ENCODE measurements at regions of chr1 and their contacts with region 1.

Region 1: DNA sequence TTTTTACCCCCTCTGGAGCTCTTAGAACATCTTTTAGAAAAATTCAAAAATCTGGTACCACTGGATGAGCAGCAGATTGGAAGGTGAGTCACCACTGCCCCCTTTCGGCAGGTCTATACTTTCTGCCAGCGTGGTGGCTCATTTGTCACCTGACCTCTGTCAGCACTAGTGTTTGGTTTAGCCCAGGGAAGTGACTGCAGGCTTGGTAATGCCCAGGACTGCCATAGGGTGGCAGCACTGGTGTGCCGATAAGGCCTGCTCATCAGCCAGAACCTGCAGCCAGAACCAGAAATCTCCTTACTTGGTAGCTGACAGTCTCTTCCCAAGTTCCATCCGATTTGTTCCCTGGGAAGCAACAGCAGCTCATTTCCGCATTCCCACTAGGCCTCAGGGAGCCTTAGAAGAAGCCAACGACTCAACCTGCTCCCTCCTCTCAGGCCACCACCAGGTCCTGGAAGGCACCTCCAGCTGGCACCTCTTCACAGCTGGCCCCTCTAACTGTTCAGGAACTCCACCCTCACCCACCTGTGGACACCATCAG is 6.8 kb downstream of the SMIM12 start:
- DNase-seq: peak; percentile 87
- H3K4me3 Mint-ChIP-seq: no peak overlapping the region
- H3K27ac Mint-ChIP-seq: no peak overlapping the region
- H3K4me1 Mint-ChIP-seq: peaks cover 18% of the 10 kb centered on the region
- H3K27me3 Mint-ChIP-seq: no peaks in the 10 kb centered on the region

Region 2: DNA sequence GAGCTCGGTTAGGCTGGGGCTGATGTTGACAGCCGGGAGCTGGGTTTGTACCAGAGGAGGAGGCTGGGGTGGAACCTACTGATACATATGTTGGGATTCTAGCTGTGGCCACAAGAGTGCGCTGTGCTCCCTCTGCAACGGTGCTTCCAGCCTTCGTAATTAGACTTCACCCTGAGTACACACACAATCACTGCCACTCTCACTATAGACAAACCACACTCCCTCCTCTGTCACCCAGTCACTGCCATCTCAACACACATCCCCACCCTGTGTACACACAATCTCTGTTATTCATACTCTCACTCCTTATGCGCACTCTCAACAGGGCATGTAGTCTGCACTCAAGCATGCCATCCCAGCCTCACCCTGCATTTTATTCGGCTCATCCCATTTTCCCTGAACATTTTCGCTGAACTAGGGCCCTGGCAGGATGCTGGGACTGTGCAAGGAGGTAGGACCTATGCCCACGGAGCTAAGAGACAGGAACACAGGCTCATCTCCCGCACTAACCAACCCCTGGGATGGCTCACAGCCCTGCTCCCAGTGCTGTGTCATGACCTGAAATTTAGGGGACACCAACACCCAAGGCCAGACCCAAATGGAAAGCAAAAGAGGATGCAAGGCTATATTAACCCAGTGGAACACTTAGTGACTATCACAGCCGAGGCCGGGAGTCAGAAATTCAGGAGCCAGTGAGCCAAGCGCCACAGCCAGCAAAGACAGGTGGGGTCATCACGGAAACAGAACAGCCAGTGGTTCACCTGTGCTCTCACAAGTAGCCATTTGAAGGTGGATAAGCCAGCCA is 66.0 kb before region 1 on chr1:
- intact Hi-C with region 1: loop called (anchors 1 kb)
- DNase-seq: peak; percentile 47
- H3K4me3 Mint-ChIP-seq: no peak overlapping the region
- H3K27ac Mint-ChIP-seq: no peak overlapping the region
- H3K4me1 Mint-ChIP-seq: peaks cover 25% of the 10 kb centered on the region
- H3K27me3 Mint-ChIP-seq: peaks cover 29% of the 10 kb centered on the region

Region 3: DNA sequence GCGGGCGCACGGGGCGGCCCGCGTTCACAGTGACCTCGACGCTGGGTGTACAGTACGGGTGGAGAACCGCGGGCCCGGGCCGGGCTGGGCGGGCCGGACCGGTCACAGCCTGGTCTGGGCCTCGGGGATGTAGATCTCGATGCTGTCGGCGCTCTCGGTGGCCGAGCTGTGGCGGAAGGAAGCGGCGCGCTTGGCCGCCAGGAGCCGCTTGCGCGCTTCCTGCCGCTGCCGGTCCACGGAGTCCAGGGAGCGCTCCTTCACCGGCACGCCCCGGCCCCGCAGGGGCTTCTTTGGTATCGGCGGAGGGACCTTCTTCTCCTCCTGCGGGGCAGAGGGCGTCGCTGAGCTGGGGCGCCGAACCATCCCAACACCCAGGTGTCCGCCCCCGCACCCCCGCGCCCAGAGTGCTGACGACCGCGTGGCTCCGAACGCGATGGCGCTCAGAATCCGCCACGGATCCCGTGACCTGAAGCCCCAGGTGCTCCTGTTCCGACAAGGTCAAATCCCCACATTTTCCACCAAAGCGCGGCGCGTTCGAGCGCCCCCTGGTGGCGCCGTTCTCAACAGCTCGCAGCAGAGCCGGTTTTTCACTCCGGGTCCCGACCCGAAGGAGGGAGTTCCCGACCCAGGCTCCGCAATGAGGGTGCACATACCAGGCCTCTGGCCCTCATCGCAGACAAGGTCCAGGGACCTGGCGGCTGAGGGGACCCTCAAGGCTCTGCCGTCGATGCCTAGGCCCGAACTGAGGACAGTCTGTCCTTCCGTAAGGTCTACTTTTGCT is 13.4 kb after region 1 on chr1:
- intact Hi-C with region 1: loop called (anchors 1 kb)
- DNase-seq: peak; percentile 85
- H3K4me3 Mint-ChIP-seq: peak overlapping the region; percentile 80
- H3K27ac Mint-ChIP-seq: peak overlapping the region; percentile 86
- H3K4me1 Mint-ChIP-seq: peaks cover 36% of the 10 kb centered on the region
- H3K27me3 Mint-ChIP-seq: peaks cover 12% of the 10 kb centered on the region

Region 4: DNA sequence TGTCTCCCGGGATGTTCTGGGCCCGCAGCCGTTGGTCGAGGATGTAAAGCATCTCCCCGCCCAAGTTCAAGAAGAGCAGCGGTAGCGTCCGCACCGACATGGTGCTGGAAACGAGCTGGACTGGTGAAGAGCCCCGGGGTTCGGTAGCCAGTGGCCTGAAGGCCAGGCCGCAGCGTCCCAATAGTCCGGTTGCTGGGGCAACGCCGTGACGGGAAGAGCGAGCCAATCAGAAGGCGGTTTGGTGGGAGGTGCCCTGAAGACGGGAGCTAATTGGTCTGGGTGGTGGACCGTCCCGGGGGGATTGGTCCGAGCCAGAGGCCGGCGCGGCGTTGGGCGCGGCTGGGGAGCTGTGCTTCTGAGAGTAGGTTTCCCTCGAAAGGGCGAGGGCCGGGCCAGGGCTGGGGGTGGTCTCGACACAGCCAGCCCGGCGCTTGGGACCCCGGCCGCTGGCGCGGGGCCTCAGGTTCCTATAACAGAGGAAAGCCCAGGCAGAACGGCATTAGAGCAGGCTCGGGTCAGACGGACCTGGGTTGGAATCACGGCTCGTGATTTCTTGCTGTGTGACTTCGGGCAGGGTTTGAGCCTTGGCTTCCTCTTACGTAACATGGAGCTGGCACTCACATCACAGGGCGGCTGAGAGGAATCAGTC is 1597.6 kb after region 1 on chr1 and contains the start of gene OSCP1:
- intact Hi-C with region 1: loop called (anchors 10 kb)
- DNase-seq: peak; percentile 86
- H3K4me3 Mint-ChIP-seq: peak within 1 kb of the TSS; percentile 86
- H3K27ac Mint-ChIP-seq: peak within 1 kb of the TSS; percentile 82
- H3K4me1 Mint-ChIP-seq: peaks cover 11% of the 10 kb centered on the region
- H3K27me3 Mint-ChIP-seq: no peaks in the 10 kb centered on the region
- total RNA-seq, gene OSCP1: 0.39 and 0.96 TPM in 2 replicates

Measured in activated T-helper 1 cell treated with anti-CD3 and anti-CD28 coated beads, Interleukin-12 subunit alpha, Interleukin-12 subunit beta, Interleukin-2, Interleukin-4 antibody, amounts not matched to agents 30 ng/mL and 10 ng/mL and 1 ng/mL, durations not matched to agents 14 hours and 24 hours and 36 hours (primary cell).